CD4-positive, alpha-beta T cell (primary cell): ENCODE measurements at regions of chr12 and their contacts with region 1.

Region 1: DNA sequence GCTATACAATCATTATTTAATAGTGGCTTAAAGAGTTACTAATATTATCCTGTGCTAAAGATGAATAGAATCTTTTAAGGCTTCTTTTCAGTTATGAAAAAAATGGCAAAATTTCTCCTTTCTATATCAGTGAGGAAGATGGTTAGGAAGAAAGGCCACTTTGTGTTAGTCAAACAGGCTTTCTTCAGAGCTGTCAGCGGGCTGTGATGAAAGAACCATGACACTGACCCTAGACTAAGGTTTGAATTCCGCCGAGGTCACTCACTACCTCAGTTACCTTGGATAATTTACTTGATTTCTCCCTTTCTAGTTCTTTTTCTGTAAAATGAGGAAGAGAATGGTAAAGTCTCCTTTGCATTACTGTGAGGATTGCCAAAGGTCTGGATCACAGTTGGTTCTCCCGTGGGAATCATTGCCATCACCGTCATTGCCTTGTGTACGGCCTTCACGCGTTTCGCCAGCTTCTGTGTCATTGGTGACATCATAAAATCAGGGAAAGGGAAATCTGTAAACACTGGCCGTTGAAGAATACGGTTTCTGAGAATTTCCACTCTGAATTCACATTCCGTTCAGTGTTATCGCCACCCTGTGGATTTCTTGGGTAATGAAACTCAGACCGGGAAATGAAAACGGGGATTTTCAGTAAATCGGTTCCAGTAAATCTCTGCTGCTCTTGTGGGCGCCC is 26.7 kb upstream of the YBX3 start:
- DNase-seq: peak; percentile 22 to 84 (median 52)
- ATAC-seq: peak; percentile 99
- H3K4me3 ChIP-seq: no peak overlapping the region
- H3K4me3 Mint-ChIP-seq: no peak overlapping the region
- H3K27ac ChIP-seq: no peak overlapping the region
- H3K27ac Mint-ChIP-seq: no peak overlapping the region
- H3K4me1 ChIP-seq: peaks cover 5% of the 10 kb centered on the region
- H3K4me1 Mint-ChIP-seq: peaks cover 7% of the 10 kb centered on the region
- H3K27me3 ChIP-seq: no peaks in the 10 kb centered on the region
- H3K27me3 Mint-ChIP-seq: peaks cover 37% of the 10 kb centered on the region
- CTCF ChIP-seq: peak; percentile 82

Region 2: GRCh38 chr12:9763025-9763424 is 986.8 kb before region 1 on chr12:
- CTCF ChIA-PET with region 1: no interaction called
- POLR2A ChIA-PET with region 1: no interaction called
- intact Hi-C with region 1: no loop called
- DNase-seq: peak in 3 of 14 experiments; percentile 56 to 68 (median 63)
- ATAC-seq: peak; percentile 16
- H3K4me3 ChIP-seq: no peak overlapping the region
- H3K4me3 Mint-ChIP-seq: peak overlapping the region; percentile 11
- H3K27ac ChIP-seq: peak overlapping the region in 1 of 2 donors; percentile 98
- H3K27ac Mint-ChIP-seq: peak overlapping the region; percentile 99
- H3K4me1 ChIP-seq: peaks cover 26% of the 10 kb centered on the region
- H3K4me1 Mint-ChIP-seq: peaks cover 60% of the 10 kb centered on the region
- H3K27me3 ChIP-seq: no peaks in the 10 kb centered on the region
- H3K27me3 Mint-ChIP-seq: no peaks in the 10 kb centered on the region
- CTCF ChIP-seq: no peak

Region 3: DNA sequence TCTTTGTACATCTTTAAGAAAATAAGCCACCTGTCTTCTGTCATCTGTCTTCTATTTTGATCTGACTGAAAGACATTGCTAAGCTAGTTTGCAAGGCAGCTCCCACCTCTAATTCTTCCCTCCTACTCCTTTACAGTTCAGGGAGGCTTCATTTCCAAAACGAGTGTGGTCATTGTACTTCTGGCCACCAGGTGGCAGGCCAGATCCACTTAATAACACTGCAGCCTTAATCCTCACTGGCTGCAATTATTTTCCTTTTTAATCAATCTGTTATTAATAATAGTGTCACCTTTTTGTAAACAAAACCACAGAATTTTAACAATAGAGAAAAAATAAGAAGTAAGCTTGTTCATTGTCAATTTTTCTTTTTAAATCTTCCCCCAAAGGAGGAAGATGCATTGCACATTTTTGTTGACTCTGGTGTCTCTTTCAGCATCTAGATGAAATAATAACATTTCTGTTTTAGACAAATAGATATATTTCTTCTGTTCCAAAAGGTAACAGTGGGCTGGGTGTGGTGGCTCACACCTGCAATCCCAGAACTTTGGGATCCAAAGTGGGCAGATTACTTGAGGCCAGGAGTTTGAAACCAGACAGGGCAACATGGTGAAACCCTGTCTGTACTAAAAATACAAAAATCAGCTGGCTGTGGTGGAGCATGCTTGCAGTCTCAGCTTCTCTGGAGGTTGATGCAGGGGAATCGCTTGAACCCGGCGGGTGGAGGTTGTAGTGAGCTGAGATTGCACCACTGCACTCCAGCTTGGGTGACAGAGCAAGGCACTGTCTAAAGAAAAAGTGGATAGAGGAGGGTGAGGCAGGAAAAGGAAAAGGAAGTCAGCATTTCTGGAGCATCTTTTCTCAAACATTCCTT is 513.8 kb before region 1 on chr12:
- CTCF ChIA-PET with region 1: no interaction called
- POLR2A ChIA-PET with region 1: no interaction called
- intact Hi-C with region 1: loop called (anchors 2 to 5 kb)
- DNase-seq: peak in 13 of 14 experiments; percentile 7 to 77 (median 33)
- ATAC-seq: peak; percentile 77
- H3K4me3 ChIP-seq: no peak overlapping the region
- H3K4me3 Mint-ChIP-seq: no peak overlapping the region
- H3K27ac ChIP-seq: no peak overlapping the region
- H3K27ac Mint-ChIP-seq: no peak overlapping the region
- H3K4me1 ChIP-seq: no peaks in the 10 kb centered on the region
- H3K4me1 Mint-ChIP-seq: no peaks in the 10 kb centered on the region
- H3K27me3 ChIP-seq: no peaks in the 10 kb centered on the region
- H3K27me3 Mint-ChIP-seq: no peaks in the 10 kb centered on the region
- CTCF ChIP-seq: peak; percentile 92

Region 4: GRCh38 chr12:10310926-10311720 is 438.7 kb before region 1 on chr12:
- CTCF ChIA-PET with region 1: no interaction called
- POLR2A ChIA-PET with region 1: no interaction called
- intact Hi-C with region 1: no loop called
- DNase-seq: no peak
- ATAC-seq: no peak
- H3K4me3 ChIP-seq: no peak overlapping the region
- H3K4me3 Mint-ChIP-seq: no peak overlapping the region
- H3K27ac ChIP-seq: no peak overlapping the region
- H3K27ac Mint-ChIP-seq: no peak overlapping the region
- H3K4me1 ChIP-seq: no peaks in the 10 kb centered on the region
- H3K4me1 Mint-ChIP-seq: no peaks in the 10 kb centered on the region
- H3K27me3 ChIP-seq: no peaks in the 10 kb centered on the region
- H3K27me3 Mint-ChIP-seq: no peaks in the 10 kb centered on the region
- CTCF ChIP-seq: no peak

Region 5: GRCh38 chr12:10613349-10614055 is 136.3 kb before region 1 on chr12 and contains the start of gene MAGOHB:
- CTCF ChIA-PET with region 1: interaction called, 5 read pairs
- POLR2A ChIA-PET with region 1: no interaction called
- intact Hi-C with region 1: loop called (anchors 1 to 5 kb)
- DNase-seq: peak; percentile 95 to 100 (median 98)
- ATAC-seq: peak; percentile 91
- H3K4me3 ChIP-seq: peak within 1 kb of the TSS; percentile 94
- H3K4me3 Mint-ChIP-seq: peak within 1 kb of the TSS; percentile 99
- H3K27ac ChIP-seq: peak within 1 kb of the TSS; percentile 93 to 95
- H3K27ac Mint-ChIP-seq: peak within 1 kb of the TSS; percentile 99
- H3K4me1 ChIP-seq: peaks cover 11% of the 10 kb centered on the region
- H3K4me1 Mint-ChIP-seq: peaks cover 26% of the 10 kb centered on the region
- H3K27me3 ChIP-seq: no peaks in the 10 kb centered on the region
- H3K27me3 Mint-ChIP-seq: peaks cover 17% of the 10 kb centered on the region
- CTCF ChIP-seq: no peak
- total RNA-seq, gene MAGOHB: 7.5 to 7.7 TPM

Region 6: GRCh38 chr12:10700581-10700980 is 49.3 kb before region 1 on chr12:
- CTCF ChIA-PET with region 1: no interaction called
- POLR2A ChIA-PET with region 1: no interaction called
- intact Hi-C with region 1: no loop called
- DNase-seq: no peak
- ATAC-seq: no peak
- H3K4me3 ChIP-seq: no peak overlapping the region
- H3K4me3 Mint-ChIP-seq: no peak overlapping the region
- H3K27ac ChIP-seq: no peak overlapping the region
- H3K27ac Mint-ChIP-seq: no peak overlapping the region
- H3K4me1 ChIP-seq: no peaks in the 10 kb centered on the region
- H3K4me1 Mint-ChIP-seq: peaks cover 11% of the 10 kb centered on the region
- H3K27me3 ChIP-seq: no peaks in the 10 kb centered on the region
- H3K27me3 Mint-ChIP-seq: no peaks in the 10 kb centered on the region
- CTCF ChIP-seq: no peak

Region 7: DNA sequence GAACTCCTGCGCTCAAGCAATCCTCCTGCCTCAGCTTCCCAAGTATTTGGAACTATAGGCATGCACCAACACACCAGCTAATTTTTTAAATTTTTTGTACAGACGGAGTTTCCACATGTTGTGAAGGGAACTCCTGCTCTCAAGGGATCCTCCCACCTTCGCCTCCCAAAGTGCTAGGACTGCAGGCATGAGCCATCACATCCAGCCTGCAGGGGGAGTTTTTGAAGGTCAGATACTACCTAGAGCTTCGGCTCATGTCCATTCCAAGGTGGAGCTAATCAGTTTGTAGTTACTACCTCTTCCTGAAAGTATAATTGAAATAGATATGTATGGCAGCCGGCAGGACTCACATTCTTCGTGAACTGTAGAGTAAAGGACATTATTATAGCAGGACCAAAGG is 276.3 kb after region 1 on chr12:
- CTCF ChIA-PET with region 1: no interaction called
- POLR2A ChIA-PET with region 1: no interaction called
- intact Hi-C with region 1: no loop called
- DNase-seq: no peak
- ATAC-seq: no peak
- H3K4me3 ChIP-seq: no peak overlapping the region
- H3K4me3 Mint-ChIP-seq: no peak overlapping the region
- H3K27ac ChIP-seq: no peak overlapping the region
- H3K27ac Mint-ChIP-seq: no peak overlapping the region
- H3K4me1 ChIP-seq: no peaks in the 10 kb centered on the region
- H3K4me1 Mint-ChIP-seq: peaks cover 7% of the 10 kb centered on the region
- H3K27me3 ChIP-seq: no peaks in the 10 kb centered on the region
- H3K27me3 Mint-ChIP-seq: no peaks in the 10 kb centered on the region
- CTCF ChIP-seq: no peak